Activated CD4-positive, alpha-beta T cell treated with anti-CD3 and anti-CD28 coated beads, Interleukin-2, amount 10 ng/mL, durations not matched to agents 24 days and 14 days (primary cell): ENCODE measurements at regions of chr7 and their contacts with region 1.

Region 1: DNA sequence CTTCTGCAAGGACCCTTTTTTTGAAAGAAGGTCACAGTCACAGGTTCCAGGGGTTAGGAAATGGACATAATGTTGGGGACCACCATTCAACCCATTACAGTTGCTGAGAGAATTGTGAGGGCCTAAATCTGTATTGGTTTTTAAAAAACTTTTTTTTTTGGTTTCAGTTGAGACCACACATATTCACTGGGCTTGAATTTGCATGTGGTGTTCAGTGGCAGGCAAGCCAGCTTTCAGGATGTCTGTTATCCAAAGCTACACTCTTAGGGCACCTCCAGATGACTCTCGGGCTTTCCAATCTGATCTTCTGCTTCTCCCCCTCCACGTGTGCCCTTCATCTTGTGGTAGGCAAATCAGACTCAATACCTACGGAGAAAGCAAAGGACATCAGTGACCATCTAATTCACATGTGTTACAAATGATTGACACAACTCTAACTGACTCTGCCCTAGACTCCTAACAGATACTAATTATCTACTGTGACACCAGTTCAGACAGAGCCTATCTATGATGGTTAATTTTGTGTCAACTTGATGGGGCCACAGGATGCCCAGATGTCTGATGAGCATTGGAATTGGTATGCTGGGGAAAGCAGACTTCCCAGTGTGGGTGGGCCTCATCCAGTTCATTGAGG is 93.3 kb upstream of the ELMO1 start:
- DNase-seq: no peak
- H3K4me3 Mint-ChIP-seq: no peak overlapping the region
- H3K27ac Mint-ChIP-seq: no peak overlapping the region
- H3K4me1 Mint-ChIP-seq: no peaks in the 10 kb centered on the region
- H3K27me3 Mint-ChIP-seq: peaks cover 9% of the 10 kb centered on the region

Region 2: DNA sequence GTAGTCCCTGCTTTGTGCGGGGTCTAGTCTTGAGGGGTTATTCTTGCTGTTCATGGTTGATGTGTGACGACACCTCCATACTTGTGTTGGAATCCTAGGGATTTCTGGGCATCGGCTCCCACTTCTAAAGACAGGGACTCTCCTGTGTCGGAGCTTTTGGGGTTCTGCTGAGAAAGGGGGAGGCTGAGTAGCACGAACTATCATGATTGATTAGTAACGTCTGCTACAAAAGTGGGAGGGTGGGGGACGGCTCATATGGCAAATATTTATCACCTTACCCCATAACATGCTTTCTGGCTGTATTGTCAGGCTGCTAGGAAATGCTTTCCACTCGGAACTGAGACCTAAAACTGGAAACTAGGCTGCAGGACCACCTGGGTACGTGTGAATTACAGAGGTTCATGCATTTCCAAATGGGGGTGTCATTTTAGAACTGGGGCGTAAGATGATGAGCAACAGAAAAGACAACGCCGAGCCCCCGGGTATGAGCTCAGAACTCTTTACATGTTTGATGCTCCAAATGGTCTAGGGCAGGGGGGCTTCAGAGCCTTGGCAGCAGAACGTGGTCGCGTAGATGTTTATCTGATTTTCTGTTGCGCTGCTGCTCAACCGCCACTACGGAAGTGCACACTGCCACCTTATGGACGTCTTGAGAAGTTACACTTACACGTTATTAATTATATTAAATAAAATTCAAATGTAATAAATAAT is 291.3 kb after region 1 on chr7:
- intact Hi-C with region 1: loop called (anchors 10 kb)
- DNase-seq: peak; percentile 77
- H3K4me3 Mint-ChIP-seq: peak overlapping the region; percentile 84
- H3K27ac Mint-ChIP-seq: no peak overlapping the region
- H3K4me1 Mint-ChIP-seq: peaks cover 3% of the 10 kb centered on the region
- H3K27me3 Mint-ChIP-seq: peaks cover 17% of the 10 kb centered on the region